ENCODE measurements at regions of chr3 and their contacts with region 1.

Region 1: DNA sequence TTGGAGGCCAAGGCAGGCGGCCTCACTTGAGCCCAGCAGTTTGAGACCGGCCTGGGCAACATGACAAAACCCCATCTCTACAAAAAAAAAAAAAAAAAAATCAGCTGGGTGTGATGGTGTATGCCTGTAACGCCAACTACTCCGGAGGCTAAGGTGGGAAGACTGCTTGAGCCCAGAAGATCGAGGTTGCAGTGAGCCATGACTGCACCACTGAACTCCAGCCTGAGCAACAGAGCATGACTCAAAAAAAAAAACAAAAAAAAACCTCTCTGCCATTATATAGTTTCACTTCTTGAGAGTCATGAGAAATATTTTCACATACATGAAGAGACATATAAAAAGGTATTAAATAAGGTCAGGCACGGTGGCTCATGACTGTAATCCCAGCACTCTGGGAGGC is 45.9 kb upstream of the CP start:
- DNase-seq: no peak
- ATAC-seq: no peak

Region 2: DNA sequence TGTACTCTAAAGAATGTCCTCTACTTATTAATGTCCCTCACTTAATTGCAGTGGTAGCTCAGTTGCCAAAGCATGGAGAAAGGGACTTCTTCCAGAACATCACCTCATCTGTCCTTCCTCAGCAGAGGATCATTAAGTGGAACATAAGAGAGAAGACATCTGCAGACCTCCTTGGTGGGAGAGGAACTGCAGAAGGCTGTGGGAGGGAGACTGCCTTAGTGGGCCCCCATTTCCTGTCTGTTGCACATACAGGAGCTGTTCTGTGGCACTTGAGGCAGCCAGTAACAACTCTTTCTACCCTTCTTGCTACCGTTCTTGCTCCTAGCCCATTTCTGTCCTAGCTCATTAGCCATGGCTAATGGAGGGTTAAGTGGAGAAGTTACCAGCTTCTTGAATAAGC is 104.5 kb before region 1 on chr3:
- intact Hi-C with region 1: no loop called
- DNase-seq: no peak
- ATAC-seq: no peak

Region 3: GRCh38 chr3:150227839-150228238 is 960.3 kb after region 1 on chr3:
- intact Hi-C with region 1: no loop called
- DNase-seq: peak; percentile 74
- ATAC-seq: peak; percentile 58

Region 4: GRCh38 chr3:151062611-151063010 is 1795.0 kb after region 1 on chr3:
- intact Hi-C with region 1: loop called (anchors 5 kb)
- DNase-seq: no peak
- ATAC-seq: no peak

Measured in sciatic nerve (tissue), 2 donors.